ENCODE measurements at regions of chr1 and their contacts with region 1.

Region 1: GRCh38 chr1:201481761-201482493 is 12.9 kb upstream of the PHLDA3 start:
- DNase-seq: peak; percentile 73
- ATAC-seq: peak; percentile 68
- H3K4me3 ChIP-seq: no peak overlapping the region
- H3K27ac ChIP-seq: no peak overlapping the region
- H3K4me1 ChIP-seq: peaks cover 14% of the 10 kb centered on the region
- H3K27me3 ChIP-seq: no peaks in the 10 kb centered on the region
- CTCF ChIP-seq: peak; percentile 86
- POLR2A ChIP-seq: no peak
- RAD21 ChIP-seq: peak; percentile 90

Region 2: DNA sequence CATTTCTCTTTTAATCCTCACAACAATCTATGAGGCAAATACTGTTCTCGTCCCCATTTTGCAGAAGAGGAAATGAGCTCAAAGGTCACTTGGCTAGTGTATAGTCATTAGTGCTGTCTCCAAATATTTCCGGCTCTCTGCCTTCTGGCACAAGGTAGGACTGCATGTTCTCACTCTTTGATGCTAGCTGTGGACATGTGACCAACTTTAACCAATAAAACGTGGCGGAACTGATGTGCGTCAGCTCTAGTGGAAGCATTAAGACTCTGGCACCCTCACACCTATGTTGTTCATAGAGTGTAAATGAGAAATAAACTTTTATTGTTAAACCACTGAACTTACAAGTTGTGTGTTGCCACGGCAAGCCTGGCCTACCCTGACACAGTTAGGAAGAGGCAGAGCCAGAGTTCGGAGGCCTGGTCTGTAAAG is 453.5 kb before region 1 on chr1:
- CTCF ChIA-PET with region 1: no interaction called
- POLR2A ChIA-PET with region 1: no interaction called
- dilution Hi-C with region 1: no loop called
- in situ Hi-C with region 1: no loop called
- intact Hi-C with region 1: no loop called
- DNase-seq: no peak
- ATAC-seq: no peak
- H3K4me3 ChIP-seq: no peak overlapping the region
- H3K27ac ChIP-seq: no peak overlapping the region
- H3K4me1 ChIP-seq: peaks cover 5% of the 10 kb centered on the region
- H3K27me3 ChIP-seq: peaks cover 20% of the 10 kb centered on the region
- CTCF ChIP-seq: no peak
- POLR2A ChIP-seq: no peak
- RAD21 ChIP-seq: no peak

Region 3: GRCh38 chr1:201385299-201385891 is 96.5 kb before region 1 on chr1:
- CTCF ChIA-PET with region 1: no interaction called
- POLR2A ChIA-PET with region 1: no interaction called
- dilution Hi-C with region 1: no loop called
- in situ Hi-C with region 1: no loop called
- intact Hi-C with region 1: no loop called
- DNase-seq: peak; percentile 19
- ATAC-seq: no peak
- H3K4me3 ChIP-seq: no peak overlapping the region
- H3K27ac ChIP-seq: no peak overlapping the region
- H3K4me1 ChIP-seq: peaks cover 20% of the 10 kb centered on the region
- H3K27me3 ChIP-seq: peaks cover under 1% of the 10 kb centered on the region
- CTCF ChIP-seq: peak; percentile 66
- POLR2A ChIP-seq: no peak
- RAD21 ChIP-seq: peak; percentile 50

Region 4: DNA sequence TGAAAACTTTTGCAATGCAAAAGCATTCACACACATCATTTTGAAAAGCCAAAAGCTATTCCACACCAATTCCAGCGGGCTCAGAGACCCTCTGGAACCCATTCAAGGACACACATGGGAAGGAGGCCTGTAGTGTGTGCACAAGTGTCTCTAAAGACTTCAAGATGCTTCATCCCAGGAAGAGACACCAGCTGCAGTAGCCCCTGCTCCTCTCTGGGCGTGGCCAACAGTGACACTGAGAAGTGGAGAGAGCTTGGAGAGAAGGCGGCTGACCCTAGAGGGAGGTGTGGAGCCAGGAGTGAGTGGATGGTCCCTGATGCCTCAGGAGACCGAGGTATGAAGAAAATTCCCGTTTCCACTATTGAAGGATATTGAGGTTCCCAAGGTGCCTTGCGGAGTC is 45.5 kb before region 1 on chr1:
- CTCF ChIA-PET with region 1: interaction called, 7 read pairs
- POLR2A ChIA-PET with region 1: no interaction called
- dilution Hi-C with region 1: no loop called
- in situ Hi-C with region 1: no loop called
- intact Hi-C with region 1: loop called (anchors 5 kb)
- DNase-seq: peak; percentile 26
- ATAC-seq: peak; percentile 55
- H3K4me3 ChIP-seq: no peak overlapping the region
- H3K27ac ChIP-seq: no peak overlapping the region
- H3K4me1 ChIP-seq: no peaks in the 10 kb centered on the region
- H3K27me3 ChIP-seq: peaks cover 4% of the 10 kb centered on the region; the same call in 1 of the 2 replicates
- CTCF ChIP-seq: peak; percentile 22; the same call in 1 of the 2 replicates
- POLR2A ChIP-seq: no peak
- RAD21 ChIP-seq: peak; percentile 38

Region 5: GRCh38 chr1:201447911-201448871 is 33.7 kb before region 1 on chr1:
- CTCF ChIA-PET with region 1: interaction called, 14 read pairs
- POLR2A ChIA-PET with region 1: interaction called, 3 read pairs
- dilution Hi-C with region 1: no loop called
- in situ Hi-C with region 1: no loop called
- intact Hi-C with region 1: no loop called
- DNase-seq: peak; percentile 70
- ATAC-seq: peak; percentile 75
- H3K4me3 ChIP-seq: no peak overlapping the region
- H3K27ac ChIP-seq: no peak overlapping the region
- H3K4me1 ChIP-seq: peaks cover 13% of the 10 kb centered on the region
- H3K27me3 ChIP-seq: no peaks in the 10 kb centered on the region
- CTCF ChIP-seq: peak; percentile 74
- POLR2A ChIP-seq: no peak
- RAD21 ChIP-seq: peak; percentile 85

Region 6: GRCh38 chr1:201506556-201507359 is 24.8 kb after region 1 on chr1 and contains the start of gene CSRP1:
- CTCF ChIA-PET with region 1: interaction called, 103 read pairs
- POLR2A ChIA-PET with region 1: interaction called, 8 read pairs
- dilution Hi-C with region 1: no loop called
- in situ Hi-C with region 1: no loop called
- intact Hi-C with region 1: no loop called
- DNase-seq: peak; percentile 87
- ATAC-seq: peak; percentile 76
- H3K4me3 ChIP-seq: peak within 1 kb of the TSS; percentile 79
- H3K27ac ChIP-seq: peak within 1 kb of the TSS; percentile 94
- H3K4me1 ChIP-seq: peaks cover 30% of the 10 kb centered on the region
- H3K27me3 ChIP-seq: no peaks in the 10 kb centered on the region
- CTCF ChIP-seq: no peak
- POLR2A ChIP-seq: peak; percentile 99
- RAD21 ChIP-seq: no peak
- total RNA-seq, gene CSRP1: 1,498 and 1,861 TPM in 2 replicates